ENCODE measurements at regions of chr5 and their contacts with region 1.

Region 1: GRCh38 chr5:96536991-96537785 is 104.1 kb upstream of the PCSK1 start:
- DNase-seq: no peak
- H3K4me3 Mint-ChIP-seq: no peak overlapping the region
- H3K27ac Mint-ChIP-seq: peak overlapping the region; percentile 83
- H3K4me1 Mint-ChIP-seq: peaks cover 32% of the 10 kb centered on the region
- H3K27me3 Mint-ChIP-seq: no peaks in the 10 kb centered on the region

Region 2: DNA sequence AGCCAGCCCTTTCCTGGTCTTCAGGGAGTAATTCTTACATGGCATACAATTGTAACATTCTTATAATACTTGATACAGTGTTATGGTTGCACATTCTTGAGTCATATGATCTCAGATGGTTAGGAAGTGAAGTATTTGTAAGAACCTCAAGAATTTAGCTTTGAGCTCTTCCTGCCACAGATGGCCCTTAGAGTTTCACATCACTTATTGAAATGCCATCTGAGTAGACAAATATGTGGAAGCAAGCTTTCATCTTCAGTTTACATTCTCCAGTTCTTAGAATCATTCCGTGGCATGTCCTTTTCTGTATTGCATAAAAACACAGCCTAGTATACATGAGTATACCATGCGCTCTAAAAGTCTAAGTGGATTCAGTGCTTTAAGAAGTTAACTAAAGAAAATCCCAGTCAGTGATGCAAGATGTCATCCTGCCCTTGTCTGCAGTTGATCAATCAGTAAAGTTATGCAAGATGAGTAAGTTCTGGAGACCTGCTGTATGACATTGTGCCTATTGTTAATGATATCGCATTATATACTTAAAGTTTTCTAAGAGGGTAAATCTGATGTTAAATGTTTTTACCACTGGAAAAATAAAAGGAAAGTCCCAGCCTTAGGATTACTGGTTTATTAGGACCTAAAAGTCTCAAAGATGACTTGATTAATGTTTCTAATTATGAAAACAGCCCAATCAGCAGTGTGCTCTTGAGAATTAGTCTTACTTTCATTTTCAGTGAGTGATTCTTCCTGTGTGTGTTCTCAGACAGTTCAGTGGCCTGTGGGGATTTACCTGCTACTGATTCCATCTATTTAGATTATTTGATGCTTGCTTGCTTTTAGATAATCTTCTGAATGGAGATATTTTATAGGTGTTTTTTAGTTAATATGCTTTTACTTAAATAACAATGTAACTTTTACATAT is 776.7 kb before region 1 on chr5:
- CTCF ChIA-PET with region 1: no interaction called
- intact Hi-C with region 1: loop called (anchors 1 kb)
- DNase-seq: peak; percentile 48
- H3K4me3 Mint-ChIP-seq: peak overlapping the region; percentile 36
- H3K27ac Mint-ChIP-seq: peak overlapping the region; percentile 47
- H3K4me1 Mint-ChIP-seq: peaks cover 26% of the 10 kb centered on the region
- H3K27me3 Mint-ChIP-seq: no peaks in the 10 kb centered on the region

Region 3: GRCh38 chr5:96279801-96280542 is 257.2 kb before region 1 on chr5:
- CTCF ChIA-PET with region 1: no interaction called
- intact Hi-C with region 1: loop called (anchors 1 kb)
- DNase-seq: peak; percentile 37
- H3K4me3 Mint-ChIP-seq: no peak overlapping the region
- H3K27ac Mint-ChIP-seq: peak overlapping the region; percentile 31
- H3K4me1 Mint-ChIP-seq: peaks cover 13% of the 10 kb centered on the region
- H3K27me3 Mint-ChIP-seq: peaks cover 26% of the 10 kb centered on the region

Region 4: DNA sequence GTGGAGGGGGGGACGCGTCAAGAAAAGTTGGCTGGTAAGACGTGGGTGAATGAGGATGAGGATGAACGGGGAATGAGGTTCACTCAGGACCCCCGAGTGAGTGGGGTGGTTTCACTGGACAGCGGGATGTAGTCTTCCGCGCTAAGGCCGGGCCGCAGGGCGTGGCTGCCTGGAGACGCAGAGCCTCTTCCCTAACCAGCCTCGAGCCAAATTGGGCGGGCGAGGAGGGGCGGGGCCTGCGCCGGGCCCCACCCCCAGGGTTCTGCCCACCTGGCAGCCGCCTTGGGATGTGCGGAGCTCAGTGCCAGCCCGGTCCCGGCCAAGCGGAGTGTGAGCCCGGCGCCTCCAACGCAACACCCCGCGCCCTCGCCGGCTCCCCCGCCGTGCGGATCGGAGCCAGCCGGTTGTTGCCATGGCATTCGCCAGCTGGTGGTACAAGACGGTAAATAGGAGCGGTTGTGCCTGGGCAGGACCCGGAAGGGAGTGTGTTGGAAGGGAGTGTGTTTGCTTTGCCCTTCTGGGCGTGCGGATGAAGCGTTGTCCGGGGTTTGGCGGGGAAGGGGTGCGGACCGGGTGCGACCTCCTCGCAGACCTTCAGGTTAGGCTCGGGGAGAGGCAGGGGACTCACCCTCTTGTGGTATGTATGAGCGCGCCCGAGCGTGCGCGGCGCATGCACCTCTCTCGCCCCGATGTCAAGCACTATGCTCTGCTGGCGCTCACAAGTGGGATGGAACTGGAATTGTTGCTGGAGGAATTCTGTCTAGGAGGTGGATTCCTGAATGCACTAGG is 125.7 kb after region 1 on chr5:
- CTCF ChIA-PET with region 1: no interaction called
- intact Hi-C with region 1: loop called (anchors 1 kb)
- DNase-seq: peak; percentile 89
- H3K4me3 Mint-ChIP-seq: peak overlapping the region; percentile 96
- H3K27ac Mint-ChIP-seq: peak overlapping the region; percentile 96
- H3K4me1 Mint-ChIP-seq: peaks cover 22% of the 10 kb centered on the region
- H3K27me3 Mint-ChIP-seq: peaks cover 3% of the 10 kb centered on the region

Region 5: DNA sequence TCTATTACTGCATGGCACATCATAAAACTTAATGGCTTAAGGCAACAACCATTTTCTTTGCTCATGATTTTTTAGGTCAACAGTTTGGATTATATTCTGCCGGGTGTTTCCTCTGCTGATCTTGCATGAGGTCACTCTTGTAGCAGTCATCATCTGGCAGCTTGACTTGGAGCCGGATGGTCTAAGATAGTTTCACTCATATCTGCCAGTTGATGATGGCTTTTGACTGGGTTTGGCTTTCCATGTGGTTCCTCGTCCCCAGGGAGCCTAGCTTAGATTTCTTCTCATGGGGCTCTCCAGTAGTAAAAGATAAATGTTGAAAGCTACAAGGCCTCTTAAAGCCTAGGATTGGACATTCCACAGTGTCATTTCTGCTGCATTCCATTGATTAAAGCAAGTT is 426.1 kb after region 1 on chr5:
- CTCF ChIA-PET with region 1: no interaction called
- intact Hi-C with region 1: loop called (anchors 5 kb)
- DNase-seq: peak; percentile 47
- H3K4me3 Mint-ChIP-seq: peak overlapping the region; percentile 69
- H3K27ac Mint-ChIP-seq: peak overlapping the region; percentile 95
- H3K4me1 Mint-ChIP-seq: peaks cover 73% of the 10 kb centered on the region
- H3K27me3 Mint-ChIP-seq: no peaks in the 10 kb centered on the region

Region 6: GRCh38 chr5:97547999-97548738 is 1011.0 kb after region 1 on chr5:
- CTCF ChIA-PET with region 1: no interaction called
- intact Hi-C with region 1: loop called (anchors 1 kb)
- DNase-seq: peak; percentile 11
- H3K4me3 Mint-ChIP-seq: no peak overlapping the region
- H3K27ac Mint-ChIP-seq: peak overlapping the region; percentile 6
- H3K4me1 Mint-ChIP-seq: peaks cover 18% of the 10 kb centered on the region
- H3K27me3 Mint-ChIP-seq: peaks cover 3% of the 10 kb centered on the region

Measured in activated naive CD4-positive, alpha-beta T cell treated with anti-CD3 and anti-CD28 coated beads for 36 hours (primary cell).